GM10248 (cell line): ENCODE measurements at regions of chr7 and their contacts with region 1.

Region 1: DNA sequence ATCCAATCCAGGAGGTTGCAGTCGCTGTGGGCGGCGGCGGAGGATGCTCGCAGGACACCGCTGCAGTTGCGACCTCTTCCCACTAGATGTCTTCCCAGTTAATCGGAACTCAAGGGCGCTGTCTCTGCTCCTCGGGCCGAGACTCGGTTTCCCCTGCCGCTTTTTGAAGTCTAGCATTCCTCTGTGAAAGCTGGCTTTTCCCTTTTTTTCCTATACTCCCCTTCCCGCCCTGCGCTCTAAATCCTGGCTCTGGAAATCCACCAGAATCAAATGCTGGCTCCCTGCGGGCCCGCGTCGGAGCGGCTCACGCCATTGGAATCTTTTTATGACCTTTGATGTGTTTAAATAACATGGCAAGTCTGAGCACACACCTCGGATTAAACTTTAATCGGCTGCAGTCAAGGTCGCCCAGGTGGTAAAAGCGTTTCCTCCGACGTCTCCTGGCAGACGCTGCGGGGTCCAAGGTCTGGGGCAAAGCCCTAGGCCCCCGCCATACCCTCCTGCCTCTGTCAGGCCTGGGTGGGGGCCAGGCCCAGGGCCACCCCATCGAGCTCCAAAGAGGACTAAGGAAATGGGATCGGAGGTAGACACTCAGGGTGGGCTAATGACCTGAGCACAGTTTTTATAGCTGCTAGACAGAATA is 10.7 kb upstream of the HOXA13 start:
- DNase-seq: peak; percentile 72
- CTCF ChIP-seq: peak; percentile 73

Region 2: DNA sequence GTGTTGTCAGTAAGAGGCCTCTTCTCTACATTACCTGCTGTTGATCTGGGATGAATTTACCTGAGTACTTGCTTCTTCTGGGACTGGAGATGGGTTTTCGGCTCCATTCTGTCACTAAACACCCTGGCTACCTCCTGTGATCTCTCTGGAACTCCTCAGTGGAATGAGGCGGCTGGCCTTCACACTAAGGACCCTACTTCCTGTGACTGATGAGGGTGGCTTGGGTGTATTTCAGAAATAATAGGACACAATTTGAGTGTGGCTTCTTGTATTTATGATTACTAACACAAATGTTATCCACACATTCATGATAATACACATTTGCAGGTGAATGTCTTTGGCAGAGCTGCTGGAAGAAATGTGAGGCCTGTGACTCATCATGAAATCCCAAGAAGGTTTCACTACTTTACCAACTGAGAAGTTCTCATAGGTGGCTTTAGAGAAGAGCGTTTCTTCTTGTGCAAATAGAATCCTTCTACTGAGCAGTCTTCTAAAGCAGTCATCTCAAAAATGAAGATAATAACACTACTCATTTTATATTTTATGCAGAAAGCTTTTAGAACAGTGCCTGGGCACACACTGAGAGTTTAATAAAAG is 10.7 kb after region 1 on chr7:
- CTCF ChIA-PET with region 1: interaction called, 16 read pairs
- POLR2A ChIA-PET with region 1: no interaction called
- DNase-seq: no peak
- CTCF ChIP-seq: no peak

Region 3: GRCh38 chr7:27774717-27775328 is 564.3 kb after region 1 on chr7:
- CTCF ChIA-PET with region 1: interaction called, 10 read pairs
- POLR2A ChIA-PET with region 1: no interaction called
- DNase-seq: no peak
- CTCF ChIP-seq: peak; percentile 69

Region 4: GRCh38 chr7:27921081-27921836 is 710.7 kb after region 1 on chr7:
- CTCF ChIA-PET with region 1: interaction called, 20 read pairs
- POLR2A ChIA-PET with region 1: no interaction called
- DNase-seq: peak; percentile 40
- CTCF ChIP-seq: peak; percentile 54